Heart right ventricle (tissue), 16 donors: ENCODE measurements at regions of chr13 and their contacts with region 1.

Region 1: GRCh38 chr13:44252938-44253337 is 120.7 kb upstream of the SERP2 start:
- DNase-seq: no peak
- ATAC-seq: peak in 4 of 8 donors; percentile 19 to 59 (median 36)
- H3K4me3 ChIP-seq: no peak overlapping the region
- H3K27ac ChIP-seq: peak overlapping the region in 9 of 10 donors; percentile 17 to 72 (median 47)
- H3K4me1 ChIP-seq: peaks cover 2 to 50% (median 16%) of the 10 kb centered on the region in 9 donors
- H3K27me3 ChIP-seq: no peaks in the 10 kb centered on the region
- CTCF ChIP-seq: no peak

Region 2: GRCh38 chr13:44350775-44351509 is 98.0 kb after region 1 on chr13:
- intact Hi-C with region 1: no loop called
- DNase-seq: no peak
- ATAC-seq: no peak
- H3K4me3 ChIP-seq: no peak overlapping the region
- H3K27ac ChIP-seq: no peak overlapping the region
- H3K4me1 ChIP-seq: no peaks in the 10 kb centered on the region
- H3K27me3 ChIP-seq: no peaks in the 10 kb centered on the region
- CTCF ChIP-seq: no peak

Region 3: GRCh38 chr13:44425041-44425814 is 172.3 kb after region 1 on chr13:
- intact Hi-C with region 1: loop called in 2 of 10 experiments (anchors 5 to 10 kb)
- DNase-seq: no peak
- ATAC-seq: no peak
- H3K4me3 ChIP-seq: no peak overlapping the region
- H3K27ac ChIP-seq: no peak overlapping the region
- H3K4me1 ChIP-seq: peaks cover 0 to 18% (median 6%) of the 10 kb centered on the region in 9 donors
- H3K27me3 ChIP-seq: no peaks in the 10 kb centered on the region
- CTCF ChIP-seq: no peak